IMR-90 (cell line): ENCODE measurements at regions of chr2 and their contacts with region 1.

Region 1: DNA sequence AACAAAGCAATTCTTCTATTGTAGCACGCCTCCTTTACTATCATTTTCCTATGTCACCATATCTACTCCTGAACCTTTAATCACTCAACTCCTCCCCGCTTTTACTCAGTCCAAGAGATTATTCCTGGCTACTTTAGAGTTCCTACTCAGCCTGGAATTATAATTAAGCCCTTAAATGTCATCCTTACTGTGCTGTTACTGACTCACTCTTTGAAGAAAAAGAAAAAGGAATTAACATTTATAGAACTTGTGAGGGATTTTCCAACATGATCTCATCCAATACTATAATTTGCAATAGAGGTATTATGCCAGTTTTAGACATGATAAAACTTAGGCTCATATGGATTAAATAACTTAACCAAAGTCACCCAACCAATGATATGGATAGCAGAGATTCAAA is 61.7 kb downstream of the CCDC88A start:
- DNase-seq: peak; percentile 69
- ATAC-seq: no peak; the same call in 1 of the 2 replicates
- H3K4me3 ChIP-seq: no peak overlapping the region
- H3K27ac ChIP-seq: no peak overlapping the region
- H3K4me1 ChIP-seq: 0 out of 2 replicates have a peak, but pooled peaks cover 2% of the 10 kb centered on the region
- H3K27me3 ChIP-seq: no peaks in the 10 kb centered on the region
- CTCF ChIP-seq: no peak
- POLR2A ChIP-seq: no peak
- RAD21 ChIP-seq: no peak

Region 2: DNA sequence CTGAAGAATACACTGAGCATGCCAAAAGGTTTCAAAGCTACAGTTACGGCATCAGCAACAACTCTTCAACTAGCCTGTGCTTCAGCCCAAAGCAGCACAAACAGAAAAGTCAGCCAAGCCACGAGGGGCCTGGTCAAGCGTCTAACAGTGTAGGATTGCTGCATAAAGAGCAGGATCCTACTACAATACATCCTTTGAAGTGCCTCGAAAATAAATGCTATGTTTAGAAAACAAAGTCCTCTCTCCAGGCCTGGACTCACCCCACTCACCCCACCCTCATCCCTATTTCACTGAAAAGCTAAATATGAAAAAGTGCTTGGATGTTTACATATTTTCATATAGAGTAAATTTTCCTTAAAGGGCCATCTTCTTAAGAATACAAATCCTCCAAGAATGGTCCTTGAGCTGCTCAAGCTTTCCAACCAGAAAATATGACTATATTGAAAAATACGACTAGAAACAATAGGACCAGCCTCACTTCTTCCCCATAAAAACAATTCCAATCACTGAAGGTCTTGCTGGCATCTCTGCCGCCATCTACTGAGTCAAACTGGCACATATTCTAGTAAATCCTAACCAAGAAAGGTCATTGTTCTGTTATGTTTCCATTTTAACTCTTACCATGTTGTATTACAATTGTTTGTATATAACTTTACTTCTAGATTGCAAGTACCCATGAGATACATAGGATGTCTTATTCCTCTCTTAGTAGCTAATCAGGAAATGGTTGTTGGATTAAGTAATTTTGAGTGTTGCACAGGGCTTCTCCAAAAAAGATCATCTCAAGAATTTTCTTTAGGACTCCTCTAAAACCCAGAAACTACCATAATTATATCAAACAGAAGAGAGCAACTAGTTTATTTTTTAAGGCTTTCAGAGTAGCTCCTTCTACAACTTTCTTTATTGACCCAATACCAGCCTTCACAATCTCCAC is 189.4 kb before region 1 on chr2:
- CTCF ChIA-PET with region 1: no interaction called
- POLR2A ChIA-PET with region 1: no interaction called
- dilution Hi-C with region 1: no loop called
- in situ Hi-C with region 1: no loop called
- intact Hi-C with region 1: no loop called
- DNase-seq: peak; percentile 85
- ATAC-seq: peak; percentile 69
- H3K4me3 ChIP-seq: no peak overlapping the region
- H3K27ac ChIP-seq: peak overlapping the region; percentile 59
- H3K4me1 ChIP-seq: peaks cover 24% of the 10 kb centered on the region
- H3K27me3 ChIP-seq: no peaks in the 10 kb centered on the region
- CTCF ChIP-seq: peak; percentile 86
- POLR2A ChIP-seq: peak; percentile 35; the same call in 1 of the 2 replicates
- RAD21 ChIP-seq: peak; percentile 95

Region 3: GRCh38 chr2:55311444-55311870 is 46.5 kb before region 1 on chr2:
- CTCF ChIA-PET with region 1: no interaction called
- POLR2A ChIA-PET with region 1: no interaction called
- dilution Hi-C with region 1: no loop called
- in situ Hi-C with region 1: no loop called
- intact Hi-C with region 1: no loop called
- DNase-seq: peak; percentile 56
- ATAC-seq: peak; percentile 95
- H3K4me3 ChIP-seq: no peak overlapping the region
- H3K27ac ChIP-seq: no peak overlapping the region
- H3K4me1 ChIP-seq: peaks cover 2% of the 10 kb centered on the region
- H3K27me3 ChIP-seq: no peaks in the 10 kb centered on the region
- CTCF ChIP-seq: peak; percentile 34
- POLR2A ChIP-seq: no peak
- RAD21 ChIP-seq: peak; percentile 31; the same call in 1 of the 2 replicates

Region 4: DNA sequence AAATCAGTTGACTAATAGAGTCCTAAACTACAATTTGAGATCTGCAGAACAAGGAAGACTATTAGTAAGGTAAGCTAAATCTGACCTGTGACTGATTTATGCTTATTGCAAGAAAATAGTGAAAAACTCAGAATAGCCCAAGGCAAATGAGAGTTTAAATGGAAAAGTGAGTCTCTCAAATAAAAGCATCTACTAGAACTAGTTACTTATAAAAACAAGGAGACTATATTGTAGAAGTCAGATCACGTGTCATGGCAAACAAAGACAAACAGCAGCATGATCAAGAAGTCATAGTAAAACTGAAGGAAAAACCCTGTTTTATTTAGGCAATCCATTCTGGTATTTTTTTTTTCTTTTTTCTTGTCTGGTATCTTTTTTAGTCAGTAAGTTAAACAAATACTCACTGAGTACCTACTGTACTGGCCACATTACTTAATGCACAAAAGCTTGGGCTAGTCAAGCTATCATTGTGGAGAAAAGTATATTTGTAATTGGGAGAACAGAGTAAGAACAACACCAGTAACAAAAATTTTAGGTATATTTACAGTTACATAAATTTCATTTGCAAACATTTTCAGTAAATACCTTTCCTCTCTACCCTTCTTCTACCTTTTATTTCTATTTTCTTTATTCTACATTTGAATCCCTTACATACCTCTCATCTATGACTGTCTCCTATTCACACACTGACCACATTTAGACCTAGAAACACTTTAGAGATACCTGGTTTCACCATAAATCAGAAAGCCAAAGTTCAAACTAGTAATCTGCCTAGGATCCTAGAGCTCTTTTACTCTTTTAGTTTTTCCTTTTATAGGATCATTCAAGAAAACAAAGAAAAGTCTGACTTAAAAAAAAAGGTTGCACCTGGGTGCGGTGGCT is 38.0 kb after region 1 on chr2:
- CTCF ChIA-PET with region 1: no interaction called
- POLR2A ChIA-PET with region 1: no interaction called
- dilution Hi-C with region 1: no loop called
- in situ Hi-C with region 1: no loop called
- intact Hi-C with region 1: no loop called
- DNase-seq: no peak
- ATAC-seq: no peak
- H3K4me3 ChIP-seq: no peak overlapping the region
- H3K27ac ChIP-seq: no peak overlapping the region
- H3K4me1 ChIP-seq: no peaks in the 10 kb centered on the region
- H3K27me3 ChIP-seq: no peaks in the 10 kb centered on the region
- CTCF ChIP-seq: no peak
- POLR2A ChIP-seq: no peak
- RAD21 ChIP-seq: no peak

Region 5: DNA sequence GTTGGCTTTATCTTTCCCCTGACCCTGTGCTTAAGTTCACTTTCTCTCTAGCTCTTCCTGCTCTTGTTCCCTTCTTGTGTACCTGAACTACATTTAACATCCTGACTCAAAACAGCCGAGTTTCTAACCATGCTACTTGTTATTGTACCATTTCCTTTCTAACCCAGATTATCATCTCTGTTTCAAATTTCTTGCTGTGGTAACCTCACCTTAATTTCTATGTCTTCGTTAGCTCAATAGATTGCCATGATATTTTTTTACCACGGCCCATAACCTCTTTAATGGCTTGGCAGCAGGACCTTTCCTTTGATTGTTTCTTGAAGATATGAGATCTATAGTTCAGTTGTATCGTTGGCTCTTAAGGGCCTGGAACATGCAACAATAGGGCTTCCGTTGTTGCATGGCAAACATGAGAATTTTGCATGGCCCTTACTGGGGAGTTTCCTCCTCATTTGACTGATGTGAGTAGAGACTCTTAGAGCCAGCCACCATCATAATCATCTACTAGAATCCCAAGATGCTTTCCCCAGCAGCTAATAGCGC is 172.7 kb after region 1 on chr2:
- CTCF ChIA-PET with region 1: no interaction called
- POLR2A ChIA-PET with region 1: interaction called, 17 read pairs
- dilution Hi-C with region 1: no loop called
- in situ Hi-C with region 1: no loop called
- intact Hi-C with region 1: no loop called
- DNase-seq: no peak
- ATAC-seq: no peak
- H3K4me3 ChIP-seq: no peak overlapping the region
- H3K27ac ChIP-seq: no peak overlapping the region
- H3K4me1 ChIP-seq: no peaks in the 10 kb centered on the region
- H3K27me3 ChIP-seq: no peaks in the 10 kb centered on the region
- CTCF ChIP-seq: no peak
- POLR2A ChIP-seq: no peak
- RAD21 ChIP-seq: no peak